ENCODE measurements at regions of chr17 and their contacts with region 1.

Region 1: GRCh38 chr17:39754161-39754951 is 16.6 kb downstream of the GRB7 start:
- DNase-seq: peak; percentile 67 to 93 (median 81)
- H3K4me3 ChIP-seq: peak overlapping the region; percentile 53 to 88 (median 78)
- H3K27ac ChIP-seq: peak overlapping the region in 58 of 59 donors; percentile 16 to 97 (median 90)
- H3K27me3 ChIP-seq: peaks cover 0 to 11% (median 0%) of the 10 kb centered on the region in 45 donors
- CTCF ChIP-seq: peak; percentile 68 to 100 (median 95)

Region 2: GRCh38 chr17:39527220-39527813 is 227.0 kb before region 1 on chr17:
- intact Hi-C with region 1: loop called in 1 of 2 experiments (anchors 5 kb)
- DNase-seq: no peak
- H3K4me3 ChIP-seq: no peak overlapping the region
- H3K27ac ChIP-seq: no peak overlapping the region
- H3K27me3 ChIP-seq: no peaks in the 10 kb centered on the region
- CTCF ChIP-seq: peak in 55 of 56 donors; percentile 22 to 70 (median 47)

Region 3: GRCh38 chr17:39621523-39622379 is 132.6 kb before region 1 on chr17:
- intact Hi-C with region 1: loop called (anchors 2 to 5 kb)
- DNase-seq: peak; percentile 83 to 95 (median 90)
- H3K4me3 ChIP-seq: peak overlapping the region in 31 of 59 donors; percentile 0 to 45 (median 24)
- H3K27ac ChIP-seq: peak overlapping the region in 53 of 59 donors; percentile 0 to 85 (median 63)
- H3K27me3 ChIP-seq: peaks cover 0 to 21% (median 3%) of the 10 kb centered on the region in 45 donors
- CTCF ChIP-seq: peak; percentile 92 to 100 (median 100)

Region 4: GRCh38 chr17:39668199-39668966 is 86.0 kb before region 1 on chr17 and contains the start of gene PNMT:
- intact Hi-C with region 1: loop called in 1 of 2 experiments (anchors 5 kb)
- DNase-seq: peak in 7 of 10 donors; percentile 36 to 71 (median 59)
- H3K4me3 ChIP-seq: peak within 1 kb of the TSS; percentile 11 to 65 (median 48)
- H3K27ac ChIP-seq: peak within 1 kb of the TSS in 33 of 59 donors; percentile 6 to 84 (median 41)
- H3K27me3 ChIP-seq: peaks cover 0 to 24% (median 0%) of the 10 kb centered on the region in 45 donors
- CTCF ChIP-seq: peak in 54 of 56 donors; percentile 22 to 77 (median 61)
- total RNA-seq, gene PNMT: 1.4 to 15.3 (median 6.7) TPM

Region 5: DNA sequence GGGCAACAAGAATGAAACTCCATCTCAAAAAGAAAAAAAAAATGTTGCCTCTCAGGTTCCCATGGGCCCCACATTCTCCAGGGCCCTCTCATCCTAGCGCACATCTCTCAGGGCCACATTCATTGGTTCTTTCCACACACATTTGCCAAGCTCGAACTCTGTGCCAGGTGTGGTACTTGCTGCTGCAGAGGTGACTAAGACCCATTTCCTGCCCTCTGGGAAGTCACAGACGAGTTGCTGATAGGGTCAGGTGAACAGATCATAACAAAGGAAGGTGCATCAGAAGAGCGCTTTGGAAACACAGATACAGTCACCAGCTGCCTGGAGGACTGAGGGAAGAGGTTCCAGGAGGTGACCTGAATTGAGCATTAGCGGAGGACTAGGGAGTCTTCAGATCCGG is 209.5 kb after region 1 on chr17:
- intact Hi-C with region 1: loop called in 1 of 2 experiments (anchors 10 kb)
- DNase-seq: no peak
- H3K4me3 ChIP-seq: no peak overlapping the region
- H3K27ac ChIP-seq: no peak overlapping the region
- H3K27me3 ChIP-seq: no peaks in the 10 kb centered on the region
- CTCF ChIP-seq: no peak

Region 6: DNA sequence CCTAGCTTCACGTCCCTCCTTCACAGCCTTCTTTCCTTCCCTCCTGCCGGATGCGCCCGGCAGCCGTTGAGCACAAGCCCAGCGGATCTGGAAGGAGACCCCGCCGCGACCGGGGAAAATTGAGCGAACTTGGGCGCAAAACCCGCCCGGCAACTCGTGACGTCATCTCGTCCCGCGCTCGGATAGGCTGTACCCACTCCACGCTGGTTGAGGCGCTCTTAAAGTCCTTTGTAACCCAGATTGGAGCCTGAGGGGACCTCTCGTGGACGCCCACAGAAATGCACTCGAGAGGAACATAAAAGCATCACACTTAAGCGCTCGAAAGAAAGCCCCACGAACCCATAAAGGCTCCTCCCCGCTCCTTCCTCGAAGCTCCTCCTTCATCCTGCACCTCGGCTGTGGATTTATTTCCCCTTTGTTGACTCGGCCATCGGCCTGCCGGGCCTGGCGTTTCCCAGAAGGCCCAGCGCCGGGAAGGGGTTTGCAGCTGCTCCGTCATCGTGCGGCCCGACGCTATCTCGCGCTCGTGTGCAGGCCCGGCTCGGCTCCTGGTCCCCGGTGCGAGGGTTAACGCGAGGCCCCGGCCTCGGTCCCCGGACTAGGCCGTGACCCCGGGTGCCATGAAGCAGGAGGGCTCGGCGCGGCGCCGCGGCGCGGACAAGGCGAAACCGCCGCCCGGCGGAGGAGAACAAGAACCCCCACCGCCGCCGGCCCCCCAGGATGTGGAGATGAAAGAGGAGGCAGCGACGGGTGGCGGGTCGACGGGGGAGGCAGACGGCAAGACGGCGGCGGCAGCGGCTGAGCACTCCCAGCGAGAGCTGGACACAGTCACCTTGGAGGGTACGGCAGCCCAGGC is 226.2 kb after region 1 on chr17 and contains the start of gene PSMD3:
- intact Hi-C with region 1: no loop called
- DNase-seq: peak; percentile 98 to 100 (median 99)
- H3K4me3 ChIP-seq: peak within 1 kb of the TSS; percentile 55 to 100 (median 98)
- H3K27ac ChIP-seq: peak within 1 kb of the TSS; percentile 44 to 97 (median 91)
- H3K27me3 ChIP-seq: no peaks in the 10 kb centered on the region
- CTCF ChIP-seq: peak; percentile 69 to 95 (median 86)
- total RNA-seq, gene PSMD3: 70.5 to 136 (median 98.5) TPM